ENCODE measurements at regions of chr19 and their contacts with region 1.

Region 1: DNA sequence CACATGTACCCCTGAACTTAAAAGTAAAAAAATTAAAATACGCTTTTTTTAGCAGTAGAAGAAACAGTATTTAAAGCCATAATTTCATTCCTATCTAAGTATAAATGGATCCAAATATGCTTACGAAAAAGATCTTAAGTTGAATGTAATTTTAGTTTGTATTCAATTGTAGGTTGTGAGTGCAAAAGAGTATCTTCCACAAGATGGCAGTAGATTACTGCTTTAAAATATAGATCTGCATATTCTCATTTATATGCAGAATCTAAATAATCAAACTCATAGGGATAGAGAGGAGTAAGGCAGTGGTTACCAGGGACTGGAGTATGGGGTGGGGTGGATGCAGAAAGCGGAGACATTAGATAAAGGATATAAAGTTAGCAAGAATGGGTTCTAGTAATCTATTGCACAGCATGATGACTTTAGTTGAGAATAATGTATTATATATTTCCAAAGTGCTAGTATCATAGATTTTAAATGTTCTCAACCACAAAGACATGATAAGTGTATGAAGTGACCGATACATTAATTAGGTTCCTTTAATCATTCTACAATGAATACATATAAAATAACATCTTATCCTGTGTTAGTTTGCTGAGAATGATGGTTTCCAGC is 14.2 kb downstream of the OR7A17 start:
- DNase-seq: peak; percentile 68
- ATAC-seq: peak; percentile 51; the same call in 1 of the 2 replicates
- H3K4me3 ChIP-seq: no peak overlapping the region
- H3K27ac ChIP-seq: no peak overlapping the region
- H3K4me1 ChIP-seq: no peaks in the 10 kb centered on the region
- H3K27me3 ChIP-seq: peaks cover 53% of the 10 kb centered on the region
- CTCF ChIP-seq: peak; percentile 84

Region 2: DNA sequence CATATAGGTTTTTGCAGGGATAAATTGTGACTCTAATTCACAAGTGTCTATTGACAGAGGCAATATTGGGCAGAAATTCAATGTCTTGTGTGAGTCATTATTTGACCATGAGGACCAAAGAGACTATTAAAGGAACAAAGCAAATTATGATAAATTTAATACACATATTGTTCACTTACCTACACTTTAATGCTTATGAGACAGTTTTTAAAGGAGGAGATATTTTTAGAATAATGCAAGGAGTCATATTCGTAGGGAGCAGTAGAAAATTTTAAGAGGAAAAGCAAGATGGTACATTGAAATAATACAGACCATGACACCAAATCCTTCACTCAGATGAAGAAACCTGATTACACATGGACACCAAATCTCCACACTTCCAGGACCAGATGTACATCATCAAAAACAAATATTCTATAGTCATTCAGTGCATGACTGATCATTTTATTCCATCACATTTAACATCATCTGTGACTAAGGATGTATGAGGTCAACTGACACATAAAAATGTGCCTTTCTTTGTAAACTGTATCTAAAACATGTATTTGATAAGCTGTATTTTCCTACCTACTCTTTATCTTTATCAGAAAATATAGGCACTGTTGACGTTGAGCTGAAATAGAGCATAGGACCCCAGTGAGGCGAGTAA is 18.4 kb after region 1 on chr19:
- CTCF ChIA-PET with region 1: no interaction called
- POLR2A ChIA-PET with region 1: no interaction called
- intact Hi-C with region 1: loop called (anchors 2 kb)
- DNase-seq: peak; percentile 62
- ATAC-seq: peak; percentile 39
- H3K4me3 ChIP-seq: no peak overlapping the region
- H3K27ac ChIP-seq: peak overlapping the region; percentile 21; the same call in 1 of the 2 replicates
- H3K4me1 ChIP-seq: peaks cover 17% of the 10 kb centered on the region
- H3K27me3 ChIP-seq: peaks cover 22% of the 10 kb centered on the region
- CTCF ChIP-seq: no peak

Region 3: GRCh38 chr19:14943601-14944000 is 71.9 kb after region 1 on chr19:
- CTCF ChIA-PET with region 1: interaction called, 12 read pairs
- POLR2A ChIA-PET with region 1: no interaction called
- intact Hi-C with region 1: no loop called
- DNase-seq: no peak
- ATAC-seq: no peak
- H3K4me3 ChIP-seq: no peak overlapping the region
- H3K27ac ChIP-seq: no peak overlapping the region
- H3K4me1 ChIP-seq: no peaks in the 10 kb centered on the region
- H3K27me3 ChIP-seq: no peaks in the 10 kb centered on the region
- CTCF ChIP-seq: no peak

Region 4: DNA sequence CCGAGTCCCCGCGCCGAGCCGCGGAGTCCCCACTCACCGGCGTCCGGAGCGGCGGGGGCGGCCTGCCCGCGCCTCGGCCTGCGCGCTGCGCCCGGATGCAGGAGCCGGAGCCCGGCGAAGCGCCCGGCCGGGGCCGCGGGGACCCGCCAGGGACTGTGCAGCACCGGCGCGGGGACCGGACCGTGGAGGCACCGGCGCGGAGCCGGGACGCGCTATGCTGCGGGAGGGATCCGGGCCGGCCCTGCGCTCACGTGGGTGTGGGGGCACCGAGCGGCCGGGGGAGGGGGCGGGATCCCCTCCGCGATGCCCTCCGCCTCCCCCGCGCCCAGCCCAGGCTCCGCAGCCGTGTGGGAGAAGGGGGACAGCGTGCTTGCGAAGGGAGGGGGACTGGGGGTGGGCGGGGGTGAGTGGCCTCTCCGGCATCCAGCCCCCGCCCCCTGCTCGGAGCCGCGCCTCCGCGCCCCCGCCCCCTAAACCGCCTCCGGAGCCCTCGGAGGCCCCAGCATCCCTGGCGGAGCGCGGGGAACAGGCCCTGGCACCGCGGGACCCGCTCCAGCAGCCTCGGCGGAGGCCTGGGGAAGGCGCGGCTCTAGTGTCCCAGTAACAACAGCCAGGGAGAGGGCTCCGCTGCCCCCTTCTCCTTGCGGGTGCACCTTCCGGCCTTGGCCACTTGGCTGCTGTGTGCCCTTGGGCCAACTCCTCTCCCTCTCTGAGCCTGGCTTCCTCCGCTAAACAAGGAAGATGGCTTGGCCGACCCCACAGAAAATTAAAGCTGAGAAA is 107.9 kb after region 1 on chr19 and contains the start of gene SLC1A6:
- CTCF ChIA-PET with region 1: no interaction called
- POLR2A ChIA-PET with region 1: no interaction called
- intact Hi-C with region 1: no loop called
- DNase-seq: no peak
- ATAC-seq: peak; percentile 52
- H3K4me3 ChIP-seq: peak within 1 kb of the TSS; percentile 50
- H3K27ac ChIP-seq: no peak within 1 kb of the TSS
- H3K4me1 ChIP-seq: no peaks in the 10 kb centered on the region
- H3K27me3 ChIP-seq: peaks cover 53% of the 10 kb centered on the region
- CTCF ChIP-seq: no peak
- total RNA-seq, gene SLC1A6: 4.4 and 9.6 TPM in 2 replicates

Region 5: DNA sequence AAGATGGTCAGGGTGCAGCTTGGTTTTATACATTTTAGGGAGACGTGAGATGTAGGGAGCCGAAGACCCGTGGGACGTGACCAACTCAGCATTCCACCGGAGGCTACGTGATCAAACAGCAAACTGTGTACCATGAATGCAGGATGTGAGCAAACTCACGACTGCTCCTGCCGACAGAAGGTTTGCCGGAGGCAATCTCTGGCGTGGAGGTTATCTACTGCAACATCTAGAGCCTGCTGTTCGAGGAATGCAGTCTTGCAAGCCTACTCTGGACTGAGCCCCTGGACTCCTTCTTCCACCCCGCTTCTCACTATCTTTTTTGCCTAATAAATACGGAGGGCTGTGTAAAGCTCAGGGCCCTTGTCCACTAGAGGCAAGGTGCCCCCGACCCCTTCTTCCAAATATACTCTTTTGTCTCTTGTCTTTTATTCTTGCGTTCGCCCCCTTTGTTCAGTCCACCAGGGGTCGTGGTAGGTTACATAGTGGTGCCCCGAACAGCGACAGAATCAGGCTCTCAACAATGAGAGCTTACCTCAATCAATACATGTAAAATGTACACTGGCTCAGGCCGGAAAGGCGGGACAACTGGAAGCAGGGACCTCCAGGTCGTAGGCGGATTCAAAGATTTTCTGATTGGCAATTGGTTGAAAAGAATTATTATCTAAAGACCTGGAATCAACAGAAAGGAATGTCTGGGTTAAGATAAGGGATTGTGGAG is 201.4 kb after region 1 on chr19:
- CTCF ChIA-PET with region 1: no interaction called
- POLR2A ChIA-PET with region 1: no interaction called
- intact Hi-C with region 1: loop called (anchors 10 kb)
- DNase-seq: peak; percentile 98
- ATAC-seq: peak; percentile 89
- H3K4me3 ChIP-seq: peak overlapping the region; percentile 46; the same call in 1 of the 2 replicates
- H3K27ac ChIP-seq: peak overlapping the region; percentile 84
- H3K4me1 ChIP-seq: peaks cover 38% of the 10 kb centered on the region
- H3K27me3 ChIP-seq: no peaks in the 10 kb centered on the region
- CTCF ChIP-seq: peak; percentile 55

Region 6: DNA sequence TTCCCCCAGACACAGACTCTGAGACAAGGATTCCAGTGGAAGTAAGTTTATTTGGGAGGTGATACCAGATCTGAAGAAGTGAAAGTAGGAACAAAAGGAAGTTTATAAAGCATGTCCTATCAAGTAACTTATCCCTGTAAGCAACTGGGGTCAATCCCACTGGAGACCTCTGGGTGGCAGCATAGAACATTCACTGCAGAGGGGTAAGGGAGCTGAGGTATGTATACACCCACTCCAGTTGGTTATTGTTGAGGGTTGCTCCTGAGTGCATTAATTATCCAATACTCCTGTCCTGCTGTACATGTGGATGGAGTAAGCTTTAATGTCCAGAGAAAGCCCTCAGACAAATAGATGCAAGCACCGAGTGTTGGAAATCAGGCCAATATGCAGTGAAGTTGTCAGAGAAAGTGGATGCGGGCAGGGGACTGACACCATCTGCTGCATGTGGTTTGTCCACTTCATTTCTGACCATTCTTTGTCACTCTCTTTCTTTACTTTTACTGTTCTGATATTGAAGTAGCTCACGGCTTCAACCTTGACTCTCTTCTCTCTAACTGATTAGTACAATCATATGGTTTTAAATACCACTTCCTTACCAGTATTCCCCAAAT is 282.4 kb after region 1 on chr19:
- CTCF ChIA-PET with region 1: no interaction called
- POLR2A ChIA-PET with region 1: no interaction called
- intact Hi-C with region 1: loop called (anchors 1 kb)
- DNase-seq: peak; percentile 74
- ATAC-seq: peak; percentile 52; the same call in 1 of the 2 replicates
- H3K4me3 ChIP-seq: no peak overlapping the region
- H3K27ac ChIP-seq: no peak overlapping the region
- H3K4me1 ChIP-seq: no peaks in the 10 kb centered on the region
- H3K27me3 ChIP-seq: no peaks in the 10 kb centered on the region
- CTCF ChIP-seq: peak; percentile 79

Measured in PC-3 (cell line).